Sciatic nerve (tissue), 2 donors: ENCODE measurements at regions of chrX and their contacts with region 1.

Region 1: GRCh38 chrX:150303386-150304097 is 59.6 kb upstream of the MAMLD1 start:
- DNase-seq: no peak
- ATAC-seq: no peak

Region 2: GRCh38 chrX:150084496-150085229 is 218.9 kb before region 1 on chrX:
- intact Hi-C with region 1: loop called (anchors 10 kb)
- DNase-seq: no peak
- ATAC-seq: no peak